Heart right ventricle (tissue), 16 donors: ENCODE measurements at regions of chr17 and their contacts with region 1.

Region 1: DNA sequence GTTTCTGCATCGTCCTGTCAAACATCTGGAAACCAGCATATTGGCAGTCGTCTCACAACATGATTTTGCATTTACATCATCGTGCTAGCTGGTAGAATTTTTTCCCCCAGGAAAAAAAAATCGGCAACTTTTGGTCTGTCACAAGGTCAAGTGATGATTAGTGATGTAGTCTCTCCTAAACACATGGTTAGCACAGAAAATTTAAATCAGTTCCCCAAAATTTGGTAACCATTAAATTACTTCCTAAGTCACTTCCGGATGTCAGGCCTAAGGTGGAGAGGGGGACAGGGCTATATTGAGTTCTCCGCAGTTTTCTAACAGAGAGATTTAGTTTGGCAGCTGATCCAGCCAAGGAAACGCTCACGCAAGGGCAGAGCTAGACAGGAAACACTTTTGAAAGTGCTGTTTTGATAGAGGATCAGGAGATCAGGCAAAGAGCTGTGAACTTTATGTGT is 271.0 kb upstream of the TBX2 start:
- DNase-seq: no peak
- ATAC-seq: peak in 7 of 8 donors; percentile 44 to 76 (median 61)
- H3K4me3 ChIP-seq: no peak overlapping the region
- H3K27ac ChIP-seq: peak overlapping the region in 9 of 10 donors; percentile 13 to 61 (median 55)
- H3K4me1 ChIP-seq: peaks cover 0 to 31% (median 22%) of the 10 kb centered on the region in 9 donors
- H3K27me3 ChIP-seq: no peaks in the 10 kb centered on the region
- CTCF ChIP-seq: no peak

Region 2: GRCh38 chr17:61009663-61010062 is 119.0 kb before region 1 on chr17:
- intact Hi-C with region 1: loop called in 2 of 10 experiments (anchors 5 to 10 kb)
- DNase-seq: peak in 1 of 2 donors; percentile 34
- ATAC-seq: peak in 5 of 8 donors; percentile 25 to 83 (median 64)
- H3K4me3 ChIP-seq: no peak overlapping the region
- H3K27ac ChIP-seq: peak overlapping the region in 4 of 10 donors; percentile 39 to 65 (median 54)
- H3K4me1 ChIP-seq: peaks cover 0 to 59% (median 38%) of the 10 kb centered on the region in 9 donors
- H3K27me3 ChIP-seq: no peaks in the 10 kb centered on the region
- CTCF ChIP-seq: no peak

Region 3: DNA sequence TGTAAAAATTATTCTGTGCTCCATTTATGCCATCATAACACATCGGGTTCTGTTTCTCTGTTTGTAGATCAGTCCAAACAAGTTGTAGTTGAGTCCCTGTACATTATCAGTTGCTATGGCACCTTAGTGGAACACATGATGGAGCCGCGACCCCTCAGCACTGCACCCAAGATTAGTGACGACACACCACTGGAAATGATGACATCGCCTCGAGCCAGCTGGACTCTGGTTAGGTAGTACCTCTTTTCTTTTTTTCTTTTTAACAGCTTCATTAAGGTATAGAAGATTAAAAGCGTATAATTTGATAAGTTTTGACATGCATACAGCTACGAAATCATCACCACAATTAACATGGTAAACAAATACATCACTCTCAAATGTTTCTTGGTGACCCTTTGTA is 90.9 kb before region 1 on chr17:
- intact Hi-C with region 1: no loop called
- DNase-seq: no peak
- ATAC-seq: no peak
- H3K4me3 ChIP-seq: no peak overlapping the region
- H3K27ac ChIP-seq: no peak overlapping the region
- H3K4me1 ChIP-seq: no peaks in the 10 kb centered on the region
- H3K27me3 ChIP-seq: no peaks in the 10 kb centered on the region
- CTCF ChIP-seq: no peak

Region 4: DNA sequence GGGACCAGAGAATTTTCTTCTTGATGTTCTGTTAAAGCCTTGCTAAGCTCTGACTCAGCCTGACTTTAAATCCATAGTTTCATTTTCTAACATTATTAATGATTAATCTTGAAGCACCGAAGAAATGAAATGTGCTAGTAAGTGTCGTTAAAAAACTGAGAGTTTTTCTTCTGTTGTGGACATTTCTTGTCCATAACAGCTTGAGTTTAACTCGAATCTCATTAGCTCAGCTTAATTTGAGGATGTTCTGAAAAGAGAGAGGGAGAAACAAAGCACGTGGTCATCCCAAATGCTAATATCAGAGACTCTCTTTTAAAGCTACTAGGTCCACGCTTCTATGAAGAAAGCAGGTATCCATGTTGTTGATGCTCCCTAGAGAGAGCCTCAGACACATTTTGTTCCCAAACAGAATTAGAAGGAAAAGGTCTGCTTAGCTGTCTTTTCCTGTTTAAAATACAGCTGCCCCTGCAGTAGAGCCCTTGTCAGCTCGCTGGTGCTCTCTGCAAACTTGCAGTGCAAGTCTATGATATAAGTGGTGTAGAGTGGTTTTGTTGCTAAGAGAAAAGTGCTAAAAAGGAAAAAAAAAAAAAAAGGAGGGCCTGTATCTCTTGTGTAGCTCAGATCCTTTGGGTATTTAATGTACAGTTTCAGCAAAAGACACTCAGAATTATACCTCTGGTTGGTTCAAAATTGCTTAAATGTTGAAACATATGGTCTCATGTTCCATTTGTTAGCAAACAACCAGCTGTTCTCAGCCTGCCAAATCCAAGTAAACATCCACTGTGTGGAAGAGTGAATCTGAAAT is 79.8 kb after region 1 on chr17:
- intact Hi-C with region 1: loop called in 1 of 10 experiments (anchors 5 kb)
- DNase-seq: no peak
- ATAC-seq: peak in 7 of 8 donors; percentile 45 to 81 (median 59)
- H3K4me3 ChIP-seq: peak overlapping the region in 5 of 10 donors; percentile 5 to 19 (median 10)
- H3K27ac ChIP-seq: peak overlapping the region; percentile 37 to 79 (median 62)
- H3K4me1 ChIP-seq: peaks cover 0 to 31% (median 17%) of the 10 kb centered on the region in 9 donors
- H3K27me3 ChIP-seq: no peaks in the 10 kb centered on the region
- CTCF ChIP-seq: no peak

Region 5: GRCh38 chr17:61389670-61390478 is 261.2 kb after region 1 on chr17:
- intact Hi-C with region 1: loop called in 2 of 10 experiments (anchors 10 kb)
- DNase-seq: peak in 1 of 2 donors; percentile 68
- ATAC-seq: peak; percentile 57 to 81 (median 73)
- H3K4me3 ChIP-seq: peak overlapping the region in 2 of 10 donors; percentile 1 to 20
- H3K27ac ChIP-seq: peak overlapping the region in 9 of 10 donors; percentile 19 to 72 (median 60)
- H3K4me1 ChIP-seq: peaks cover 0 to 24% (median 8%) of the 10 kb centered on the region in 9 donors
- H3K27me3 ChIP-seq: peaks cover 0 to 12% (median 0%) of the 10 kb centered on the region in 7 donors
- CTCF ChIP-seq: peak; percentile 66 to 92 (median 90)